ENCODE measurements at regions of chr2 and their contacts with region 1.

Region 1: DNA sequence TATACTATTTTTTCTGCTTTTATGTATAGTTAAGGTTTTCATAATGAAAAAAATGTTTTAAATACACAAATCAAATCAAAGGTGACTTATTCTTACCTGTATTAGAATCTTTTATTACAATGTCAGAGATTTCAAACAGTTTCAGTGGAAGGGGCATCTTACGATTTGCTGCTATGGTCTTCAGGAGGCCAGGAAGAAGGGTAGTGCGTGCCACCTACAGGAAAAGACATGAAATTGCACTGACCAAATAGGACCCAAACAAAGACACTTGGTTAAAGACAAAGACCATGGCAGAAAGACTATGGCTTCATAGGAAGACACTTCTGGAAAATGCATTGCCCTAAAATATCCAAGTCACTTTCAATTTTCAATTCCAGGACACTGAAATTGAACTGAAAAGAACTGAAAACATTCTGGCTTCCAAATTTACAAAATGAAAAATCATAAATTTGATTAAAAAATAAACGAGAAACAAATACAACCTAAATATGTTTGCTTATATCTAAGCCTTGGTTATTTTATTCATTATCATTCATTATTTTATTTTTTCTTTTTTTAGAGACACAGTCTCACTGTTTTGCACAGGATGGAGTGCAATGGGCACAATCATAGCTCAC is 42.1 kb downstream of the FARSB start:
- DNase-seq: peak; percentile 49
- H3K4me3 ChIP-seq: no peak overlapping the region
- H3K27ac ChIP-seq: no peak overlapping the region
- H3K4me1 ChIP-seq: no peaks in the 10 kb centered on the region
- CTCF ChIP-seq: peak; percentile 88

Region 2: DNA sequence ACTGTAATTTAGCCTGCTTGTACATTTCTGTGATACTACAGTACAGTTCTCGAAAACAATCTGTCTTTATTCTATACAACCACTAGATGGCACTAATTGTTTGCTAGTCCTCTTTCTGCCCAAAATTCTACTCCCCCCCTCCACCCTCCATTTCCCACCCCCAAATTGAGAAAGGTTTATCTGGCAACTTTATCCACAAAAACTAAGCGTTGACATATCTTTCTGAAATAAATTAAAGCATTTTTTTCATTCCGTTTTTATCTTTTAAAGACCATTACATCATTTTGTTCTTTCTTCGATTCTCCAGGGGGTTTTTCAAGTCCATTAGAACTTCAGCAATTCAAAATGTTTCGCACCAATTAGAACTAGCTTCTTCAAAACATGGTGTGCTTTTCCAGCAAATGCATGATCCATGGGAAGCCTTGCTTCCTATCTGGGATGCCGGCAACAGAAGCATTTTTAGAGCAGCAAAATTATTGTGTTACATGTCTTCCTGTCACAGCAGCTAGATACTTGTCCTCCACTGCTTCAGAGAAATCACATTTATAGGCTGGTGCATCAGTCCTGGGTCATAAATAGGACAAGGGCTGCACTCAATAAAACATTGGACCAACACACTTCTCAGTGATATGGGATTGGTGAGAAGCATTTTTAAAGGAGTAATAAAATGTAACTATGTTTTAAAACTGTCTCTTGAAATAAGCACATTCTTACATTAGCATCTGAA is 556.3 kb before region 1 on chr2:
- CTCF ChIA-PET with region 1: no interaction called
- POLR2A ChIA-PET with region 1: no interaction called
- intact Hi-C with region 1: loop called (anchors 10 kb)
- DNase-seq: peak; percentile 21
- H3K4me3 ChIP-seq: no peak overlapping the region
- H3K27ac ChIP-seq: no peak overlapping the region
- H3K4me1 ChIP-seq: no peaks in the 10 kb centered on the region
- CTCF ChIP-seq: peak; percentile 85

Region 3: DNA sequence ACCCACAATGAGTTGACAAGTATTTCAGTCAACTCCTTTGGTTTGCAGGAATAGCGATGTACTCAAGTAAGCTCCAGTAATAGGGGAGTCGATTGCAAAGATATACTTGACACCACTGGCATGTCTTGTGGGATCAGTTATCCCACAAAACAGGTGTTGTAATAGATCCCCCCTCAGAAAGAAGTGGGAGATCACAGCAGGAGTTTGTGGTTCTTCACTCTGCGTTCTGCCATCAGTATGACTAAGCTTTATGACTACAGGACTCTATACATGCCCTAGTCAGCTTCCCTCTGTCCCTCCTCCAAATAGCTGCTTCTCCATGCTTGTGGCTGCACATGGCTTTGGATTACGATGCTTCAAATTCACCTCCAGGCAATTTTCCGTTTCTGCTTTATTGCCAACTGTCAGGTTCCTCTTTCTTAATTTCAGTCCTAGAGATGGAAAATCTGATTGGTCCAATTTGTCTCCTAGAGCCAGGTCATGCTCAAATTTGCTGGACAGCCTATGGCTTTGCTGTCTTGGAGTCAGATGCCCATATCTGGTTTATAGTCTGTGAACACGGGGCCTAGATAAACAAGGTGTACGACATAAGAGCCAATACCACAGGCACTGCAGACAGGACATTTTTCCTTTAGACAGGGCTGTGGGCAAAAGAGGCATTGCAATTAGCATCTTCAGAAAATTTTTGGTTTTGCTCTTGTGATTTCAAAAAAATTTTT is 536.7 kb before region 1 on chr2:
- CTCF ChIA-PET with region 1: no interaction called
- POLR2A ChIA-PET with region 1: no interaction called
- intact Hi-C with region 1: no loop called
- DNase-seq: no peak
- H3K4me3 ChIP-seq: no peak overlapping the region
- H3K27ac ChIP-seq: no peak overlapping the region
- H3K4me1 ChIP-seq: no peaks in the 10 kb centered on the region
- CTCF ChIP-seq: no peak

Region 4: DNA sequence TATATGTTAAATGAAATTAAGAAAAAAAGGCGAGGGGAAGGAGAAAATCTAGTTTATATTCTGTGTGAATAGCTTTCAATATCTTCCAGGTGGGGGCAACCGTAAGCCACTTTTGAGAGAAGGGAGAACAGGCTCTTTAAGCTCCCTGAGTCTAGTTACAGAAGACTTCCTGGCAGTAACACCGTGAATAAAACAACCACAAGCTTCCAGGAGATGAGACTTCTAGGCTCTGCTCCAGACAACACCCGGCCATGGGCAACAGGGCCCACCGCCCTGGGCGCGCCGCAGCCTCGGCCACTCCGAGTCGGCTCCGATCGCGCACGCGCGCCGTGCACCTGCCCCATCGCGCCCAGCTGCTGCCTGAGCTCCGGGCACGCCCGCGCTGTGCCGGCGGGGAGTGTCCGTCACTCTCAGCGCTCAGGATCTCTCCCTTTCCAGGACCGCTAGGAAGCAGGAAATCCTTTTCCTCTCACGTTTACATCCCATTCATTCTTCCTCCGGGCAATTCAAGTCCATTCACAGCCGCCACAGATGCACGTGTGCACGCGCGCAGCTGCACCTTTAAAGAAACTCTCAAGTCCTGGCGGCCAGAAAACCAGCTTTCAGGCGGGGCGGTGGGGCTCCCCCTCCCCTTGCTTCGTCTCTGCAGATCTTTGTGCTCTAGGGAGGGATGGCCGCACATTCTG is 295.7 kb before region 1 on chr2:
- CTCF ChIA-PET with region 1: no interaction called
- POLR2A ChIA-PET with region 1: no interaction called
- intact Hi-C with region 1: loop called (anchors 5 kb)
- DNase-seq: peak; percentile 36
- H3K4me3 ChIP-seq: peak overlapping the region; percentile 65
- H3K27ac ChIP-seq: no peak overlapping the region
- H3K4me1 ChIP-seq: no peaks in the 10 kb centered on the region
- CTCF ChIP-seq: peak; percentile 74

Region 5: GRCh38 chr2:222576171-222577081 is 37.4 kb before region 1 on chr2:
- CTCF ChIA-PET with region 1: no interaction called
- POLR2A ChIA-PET with region 1: interaction called, 3 read pairs
- intact Hi-C with region 1: loop called (anchors 1 kb)
- DNase-seq: no peak
- H3K4me3 ChIP-seq: no peak overlapping the region
- H3K27ac ChIP-seq: no peak overlapping the region
- H3K4me1 ChIP-seq: peaks cover 14% of the 10 kb centered on the region
- CTCF ChIP-seq: no peak

Region 6: GRCh38 chr2:222663479-222663878 is 49.7 kb after region 1 on chr2:
- CTCF ChIA-PET with region 1: no interaction called
- POLR2A ChIA-PET with region 1: no interaction called
- intact Hi-C with region 1: no loop called
- DNase-seq: no peak
- H3K4me3 ChIP-seq: no peak overlapping the region
- H3K27ac ChIP-seq: no peak overlapping the region
- H3K4me1 ChIP-seq: no peaks in the 10 kb centered on the region
- CTCF ChIP-seq: no peak

Region 7: DNA sequence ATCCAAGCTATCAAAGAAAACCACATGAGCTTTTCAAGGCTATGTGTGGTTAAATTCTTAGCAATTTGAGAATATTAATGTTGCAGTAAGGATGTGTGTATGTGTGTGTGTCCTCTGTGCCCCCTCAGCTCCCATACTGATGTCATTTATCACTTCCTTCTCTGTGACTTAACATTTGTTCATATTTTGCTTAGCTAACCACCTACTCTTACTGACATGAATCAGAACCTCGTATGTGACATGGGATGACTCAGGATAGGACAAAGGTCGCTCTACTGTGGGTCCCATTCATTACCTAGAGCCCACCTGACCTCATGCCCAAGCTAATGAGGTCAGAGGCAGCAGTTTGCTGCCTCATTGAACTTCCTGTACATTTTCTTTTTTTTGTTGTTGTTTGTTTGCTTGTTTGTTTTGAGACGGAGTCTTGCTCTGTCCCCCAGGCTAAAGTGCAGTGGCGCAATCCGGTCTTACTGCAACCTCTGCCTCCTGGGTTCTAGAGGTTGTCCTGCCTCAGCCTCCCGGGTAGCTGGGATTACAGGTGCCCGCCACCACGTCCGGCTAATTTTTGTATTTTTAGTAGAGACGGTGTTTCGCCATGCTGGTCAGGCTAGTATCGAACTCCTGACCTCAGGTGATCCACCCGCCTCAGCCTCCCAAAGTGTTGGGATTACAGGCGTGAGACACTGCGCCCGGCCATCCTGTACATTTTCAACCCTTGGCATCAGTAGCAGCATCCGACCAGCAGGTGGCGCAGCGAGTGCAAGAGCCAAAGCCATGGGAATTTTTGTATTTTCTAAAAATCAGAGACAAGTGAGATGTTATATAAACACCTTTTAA is 94.1 kb after region 1 on chr2:
- CTCF ChIA-PET with region 1: no interaction called
- POLR2A ChIA-PET with region 1: no interaction called
- intact Hi-C with region 1: no loop called
- DNase-seq: peak; percentile 76
- H3K4me3 ChIP-seq: no peak overlapping the region
- H3K27ac ChIP-seq: no peak overlapping the region
- H3K4me1 ChIP-seq: peaks cover 17% of the 10 kb centered on the region
- CTCF ChIP-seq: peak; percentile 96

Measured in OCI-LY7 (cell line).